CD8-positive, alpha-beta T cell (primary cell): ENCODE measurements at regions of chr4 and their contacts with region 1.

Region 1: GRCh38 chr4:70704331-70705145 is 16.2 kb downstream of the UTP3 start:
- DNase-seq: peak; percentile 32 to 84 (median 62)
- ATAC-seq: peak; percentile 45
- H3K4me3 ChIP-seq: peak overlapping the region; percentile 53 to 64
- H3K4me3 Mint-ChIP-seq: peak overlapping the region; percentile 93
- H3K27ac ChIP-seq: peak overlapping the region; percentile 59 to 86
- H3K27ac Mint-ChIP-seq: peak overlapping the region; percentile 88
- H3K4me1 ChIP-seq: peaks cover 29% of the 10 kb centered on the region
- H3K4me1 Mint-ChIP-seq: peaks cover 28% of the 10 kb centered on the region
- H3K27me3 ChIP-seq: no peaks in the 10 kb centered on the region
- H3K27me3 Mint-ChIP-seq: no peaks in the 10 kb centered on the region
- CTCF ChIP-seq: no peak

Region 2: DNA sequence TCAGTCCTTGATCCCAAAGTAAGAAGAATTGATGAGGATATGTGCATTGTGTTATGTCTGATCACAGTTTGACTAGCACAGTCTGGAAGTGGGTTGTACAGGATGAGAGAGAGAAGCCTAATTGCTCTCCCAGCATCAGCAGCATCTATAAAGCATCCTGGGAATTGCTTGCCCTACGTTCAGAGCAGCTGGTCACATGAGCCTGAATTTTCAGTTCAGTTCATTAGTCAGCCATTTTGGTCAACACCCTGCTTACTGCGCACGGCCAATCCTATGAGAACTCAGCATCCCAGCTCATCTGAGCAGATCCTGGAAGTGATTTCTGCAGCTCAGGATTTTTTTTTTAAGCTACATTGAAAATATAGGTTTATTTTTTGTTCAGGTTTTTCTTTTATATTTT is 17.2 kb after region 1 on chr4 and contains the start of gene RUFY3:
- CTCF ChIA-PET with region 1: interaction called, 3 read pairs
- POLR2A ChIA-PET with region 1: interaction called, 33 read pairs
- intact Hi-C with region 1: loop called (anchors 2 kb)
- DNase-seq: no peak
- ATAC-seq: no peak
- H3K4me3 ChIP-seq: no peak within 1 kb of the TSS
- H3K4me3 Mint-ChIP-seq: peak within 1 kb of the TSS; percentile 42
- H3K27ac ChIP-seq: peak within 1 kb of the TSS; percentile 6 to 18
- H3K27ac Mint-ChIP-seq: peak within 1 kb of the TSS; percentile 80
- H3K4me1 ChIP-seq: peaks cover 19% of the 10 kb centered on the region
- H3K4me1 Mint-ChIP-seq: peaks cover 28% of the 10 kb centered on the region
- H3K27me3 ChIP-seq: no peaks in the 10 kb centered on the region
- H3K27me3 Mint-ChIP-seq: no peaks in the 10 kb centered on the region
- CTCF ChIP-seq: no peak
- total RNA-seq, gene RUFY3: 18.4 to 26.5 TPM

Region 3: DNA sequence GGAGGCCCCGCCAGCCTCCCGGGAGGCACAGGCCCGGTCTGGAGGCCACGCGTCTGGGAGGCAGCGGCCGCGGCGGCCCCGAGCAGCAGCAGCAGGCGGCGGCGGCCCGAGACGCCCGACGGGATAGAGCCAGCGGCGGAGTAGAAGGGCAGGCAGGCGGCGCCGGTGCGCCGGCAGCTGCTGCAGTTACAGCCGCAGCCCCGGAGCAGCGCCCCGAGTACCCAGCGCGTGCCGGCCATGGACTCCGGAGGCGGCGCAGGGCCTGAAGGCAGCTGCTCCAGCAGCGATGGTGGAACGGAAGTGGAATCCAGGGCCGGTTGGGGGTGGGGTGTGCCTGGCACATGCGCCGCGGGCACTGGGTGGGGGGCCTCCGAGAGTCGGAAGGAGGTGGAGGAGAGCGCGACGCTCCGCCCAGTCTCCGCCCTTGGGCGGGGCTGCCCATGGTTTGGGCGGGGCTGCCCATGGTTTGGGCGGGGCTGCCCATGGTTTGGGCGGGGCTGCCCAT is 135.1 kb after region 1 on chr4 and contains the start of gene GRSF1:
- CTCF ChIA-PET with region 1: no interaction called
- POLR2A ChIA-PET with region 1: interaction called, 23 read pairs
- intact Hi-C with region 1: loop called (anchors 1 kb)
- DNase-seq: peak; percentile 90 to 97 (median 95)
- ATAC-seq: peak; percentile 94
- H3K4me3 ChIP-seq: peak within 1 kb of the TSS; percentile 65 to 80
- H3K4me3 Mint-ChIP-seq: peak within 1 kb of the TSS; percentile 97
- H3K27ac ChIP-seq: peak within 1 kb of the TSS; percentile 80
- H3K27ac Mint-ChIP-seq: peak within 1 kb of the TSS; percentile 97
- H3K4me1 ChIP-seq: peaks cover 29% of the 10 kb centered on the region
- H3K4me1 Mint-ChIP-seq: peaks cover 31% of the 10 kb centered on the region
- H3K27me3 ChIP-seq: no peaks in the 10 kb centered on the region
- H3K27me3 Mint-ChIP-seq: no peaks in the 10 kb centered on the region
- CTCF ChIP-seq: no peak
- total RNA-seq, gene GRSF1: 32.1 to 35.7 TPM

Region 4: DNA sequence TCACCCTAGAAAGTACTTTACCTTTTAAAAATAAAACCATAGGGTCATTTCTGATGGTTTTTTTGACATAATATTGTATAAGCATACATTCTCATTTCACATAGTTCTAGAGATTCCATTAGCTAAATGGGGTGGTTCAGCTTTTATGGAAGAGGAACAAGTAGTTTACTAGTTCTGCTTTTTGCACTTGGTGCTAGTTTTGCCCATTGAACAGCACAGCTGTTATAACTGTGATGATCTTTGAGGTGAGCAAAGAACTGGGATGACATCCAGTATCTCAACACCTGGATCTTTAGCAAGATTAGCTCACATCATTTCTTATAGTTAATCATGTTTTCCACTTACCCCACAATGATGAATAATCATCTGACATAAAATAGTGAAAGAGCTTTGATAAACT is 238.6 kb after region 1 on chr4:
- CTCF ChIA-PET with region 1: no interaction called
- POLR2A ChIA-PET with region 1: no interaction called
- intact Hi-C with region 1: no loop called
- DNase-seq: no peak
- ATAC-seq: no peak
- H3K4me3 ChIP-seq: no peak overlapping the region
- H3K4me3 Mint-ChIP-seq: no peak overlapping the region
- H3K27ac ChIP-seq: no peak overlapping the region
- H3K27ac Mint-ChIP-seq: no peak overlapping the region
- H3K4me1 ChIP-seq: no peaks in the 10 kb centered on the region
- H3K4me1 Mint-ChIP-seq: peaks cover 14% of the 10 kb centered on the region
- H3K27me3 ChIP-seq: no peaks in the 10 kb centered on the region
- H3K27me3 Mint-ChIP-seq: no peaks in the 10 kb centered on the region
- CTCF ChIP-seq: no peak

Region 5: DNA sequence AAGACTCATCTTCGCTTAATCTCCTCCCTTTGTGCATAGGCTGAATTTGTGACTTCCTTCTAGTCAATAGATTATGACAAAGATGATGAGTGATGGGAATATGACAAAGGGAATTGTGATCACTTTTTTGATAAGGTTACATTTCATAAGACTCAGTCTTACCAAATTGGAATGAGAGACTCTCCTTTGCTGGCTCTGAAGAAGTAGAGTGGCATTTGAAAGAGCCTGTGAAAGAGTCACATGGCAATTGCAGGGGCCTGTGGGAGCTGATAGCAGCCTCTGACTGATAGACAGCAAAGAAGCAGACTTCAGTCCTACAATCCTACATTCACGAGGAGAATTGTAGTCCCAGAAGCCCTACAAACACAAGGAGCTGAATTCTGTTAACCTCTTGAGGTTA is 1909.4 kb after region 1 on chr4:
- CTCF ChIA-PET with region 1: no interaction called
- POLR2A ChIA-PET with region 1: no interaction called
- intact Hi-C with region 1: no loop called
- DNase-seq: no peak
- ATAC-seq: no peak
- H3K4me3 ChIP-seq: no peak overlapping the region
- H3K4me3 Mint-ChIP-seq: no peak overlapping the region
- H3K27ac ChIP-seq: no peak overlapping the region
- H3K27ac Mint-ChIP-seq: no peak overlapping the region
- H3K4me1 ChIP-seq: no peaks in the 10 kb centered on the region
- H3K4me1 Mint-ChIP-seq: no peaks in the 10 kb centered on the region
- H3K27me3 ChIP-seq: no peaks in the 10 kb centered on the region
- H3K27me3 Mint-ChIP-seq: no peaks in the 10 kb centered on the region
- CTCF ChIP-seq: no peak